AG04450 (cell line): ENCODE measurements at regions of chr2 and their contacts with region 1.

Region 1: DNA sequence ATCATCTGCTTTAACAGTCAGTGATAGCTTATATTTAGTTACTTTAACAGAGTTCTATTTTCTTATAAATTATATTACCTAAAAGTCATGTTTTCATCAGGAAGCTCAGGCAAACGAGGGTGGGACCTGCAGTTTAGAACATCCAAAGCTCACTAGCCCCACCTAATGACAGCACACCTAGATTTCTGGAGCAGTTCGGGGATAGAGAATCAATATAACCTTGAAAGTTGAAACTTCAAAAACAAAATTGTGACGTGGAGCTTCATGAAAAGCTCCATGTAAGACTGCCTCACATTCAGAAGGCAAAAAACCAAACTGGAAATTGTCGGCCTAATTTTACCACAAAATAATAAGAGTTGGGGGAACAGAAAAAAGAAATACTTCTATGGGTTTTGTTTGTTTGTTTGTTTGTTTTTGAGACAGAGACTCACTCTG is 185.9 kb upstream of the CCDC150 start:
- DNase-seq: peak; percentile 34
- H3K4me3 ChIP-seq: no peak overlapping the region
- H3K27ac ChIP-seq: no peak overlapping the region
- H3K27me3 ChIP-seq: no peaks in the 10 kb centered on the region
- CTCF ChIP-seq: peak; percentile 74

Region 2: DNA sequence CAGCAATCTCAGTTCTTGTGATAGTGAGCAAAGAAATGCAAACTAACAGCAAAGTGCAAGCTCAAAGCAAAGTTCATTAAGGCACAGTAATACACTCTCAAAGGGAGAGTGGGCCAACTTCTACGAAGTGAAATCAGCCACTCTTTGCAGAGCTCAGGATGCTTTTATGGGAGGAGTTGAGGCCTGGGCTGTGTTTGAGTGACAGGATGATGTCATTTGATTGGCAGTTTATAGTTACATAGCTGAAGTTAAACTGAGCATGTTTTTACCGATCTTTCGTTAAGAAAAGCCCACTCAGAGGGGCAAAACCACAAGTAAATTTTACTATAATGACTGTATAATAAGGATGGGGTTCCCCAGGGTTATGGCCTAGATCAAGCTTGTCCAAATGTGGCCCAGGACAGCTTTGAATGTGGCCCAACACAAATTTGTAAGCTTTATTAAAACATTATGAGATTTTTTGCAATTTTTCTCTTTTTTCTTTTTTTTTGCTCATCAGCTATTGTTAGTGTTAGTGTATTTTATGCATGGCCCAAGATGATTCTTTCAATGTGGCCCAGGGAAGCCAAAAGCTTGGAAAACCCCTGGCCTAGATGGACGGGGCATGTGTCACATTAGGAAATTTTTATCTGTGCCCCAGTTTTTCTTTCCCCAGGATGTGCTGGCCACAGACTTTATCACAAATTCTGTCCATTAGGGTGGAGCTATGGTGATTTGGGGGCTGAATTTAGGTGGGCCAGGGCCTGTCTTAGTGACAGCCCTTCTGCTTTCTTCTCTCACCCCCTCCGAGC is 376.7 kb before region 1 on chr2:
- CTCF ChIA-PET with region 1: interaction called, 58 read pairs
- POLR2A ChIA-PET with region 1: no interaction called
- DNase-seq: no peak
- H3K4me3 ChIP-seq: no peak overlapping the region
- H3K27ac ChIP-seq: no peak overlapping the region
- H3K27me3 ChIP-seq: no peaks in the 10 kb centered on the region
- CTCF ChIP-seq: no peak

Region 3: DNA sequence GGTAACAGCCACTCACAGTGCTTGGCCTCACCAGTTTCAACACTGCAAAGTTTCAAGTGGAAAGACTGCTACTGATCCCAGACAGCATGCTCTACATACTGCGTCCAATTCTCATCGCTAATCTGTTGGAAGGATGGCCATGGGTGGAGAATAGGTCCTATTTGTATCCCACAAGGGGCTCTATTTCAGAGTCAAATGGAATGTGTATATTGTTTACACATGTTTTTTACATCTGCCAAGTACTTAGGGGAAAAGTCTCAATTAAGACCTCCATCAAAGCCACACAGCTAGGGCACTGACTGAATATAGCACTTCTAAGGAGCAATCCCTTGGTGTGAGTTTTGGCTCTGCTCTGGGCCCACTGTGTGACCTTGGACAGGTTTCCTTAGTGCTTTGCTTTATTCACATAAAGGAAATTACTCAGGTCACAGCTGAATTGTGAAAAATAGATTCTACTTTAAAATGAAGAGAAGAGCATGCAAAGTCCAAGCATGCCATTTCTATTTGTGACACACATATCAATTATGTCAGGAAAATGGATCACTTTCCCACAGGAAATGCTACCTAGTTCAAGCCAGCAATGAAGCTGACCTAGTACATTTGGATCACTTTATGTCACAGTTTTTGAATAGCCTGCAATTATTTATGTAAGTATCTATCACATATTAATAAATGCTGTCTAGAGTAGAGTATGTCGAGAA is 169.3 kb before region 1 on chr2:
- CTCF ChIA-PET with region 1: interaction called, 12 read pairs
- POLR2A ChIA-PET with region 1: no interaction called
- DNase-seq: no peak
- H3K4me3 ChIP-seq: no peak overlapping the region
- H3K27ac ChIP-seq: no peak overlapping the region
- H3K27me3 ChIP-seq: no peaks in the 10 kb centered on the region
- CTCF ChIP-seq: no peak

Region 4: DNA sequence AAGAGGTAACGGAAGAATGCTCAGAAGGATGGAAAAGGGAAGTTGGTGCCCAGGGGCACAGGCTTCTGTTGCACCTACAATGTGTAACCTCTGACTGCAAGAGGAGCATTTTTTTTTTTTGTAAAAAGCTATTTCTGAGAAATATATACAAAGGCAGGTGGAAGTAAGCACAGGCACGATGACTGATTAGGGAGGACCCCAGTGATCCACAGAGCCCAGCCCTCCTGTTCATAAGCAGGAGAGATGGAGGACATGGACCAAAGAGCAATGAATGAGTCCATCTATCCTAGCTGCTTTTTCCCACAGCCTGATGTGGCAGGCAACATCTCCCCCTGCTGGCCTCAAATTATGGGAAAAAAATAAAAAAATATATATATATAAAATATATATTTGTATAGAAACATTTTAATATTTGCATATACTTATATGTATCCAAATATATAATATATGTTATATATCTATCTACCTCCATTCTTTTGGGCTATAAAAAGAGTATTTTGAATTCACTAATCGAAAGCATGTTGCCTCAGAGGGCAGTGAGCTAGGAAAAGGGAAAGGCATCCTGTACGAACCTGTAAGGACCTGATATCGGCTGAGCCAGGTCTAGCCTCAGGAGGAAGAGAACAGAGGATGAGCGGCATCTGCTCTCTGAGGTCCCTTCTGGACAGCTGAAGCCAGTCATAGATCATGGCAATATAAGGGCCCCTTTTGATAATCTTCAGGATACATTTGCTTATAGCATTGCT is 116.2 kb before region 1 on chr2:
- CTCF ChIA-PET with region 1: interaction called, 45 read pairs
- POLR2A ChIA-PET with region 1: no interaction called
- DNase-seq: no peak
- H3K4me3 ChIP-seq: no peak overlapping the region
- H3K27ac ChIP-seq: no peak overlapping the region
- H3K27me3 ChIP-seq: no peaks in the 10 kb centered on the region
- CTCF ChIP-seq: peak; percentile 60

Region 5: GRCh38 chr2:196356332-196356731 is 97.3 kb before region 1 on chr2:
- CTCF ChIA-PET with region 1: interaction called, 12 read pairs
- POLR2A ChIA-PET with region 1: no interaction called
- DNase-seq: no peak
- H3K4me3 ChIP-seq: no peak overlapping the region
- H3K27ac ChIP-seq: no peak overlapping the region
- H3K27me3 ChIP-seq: no peaks in the 10 kb centered on the region
- CTCF ChIP-seq: no peak

Region 6: GRCh38 chr2:196431957-196432356 is 21.7 kb before region 1 on chr2:
- CTCF ChIA-PET with region 1: interaction called, 19 read pairs
- POLR2A ChIA-PET with region 1: no interaction called
- DNase-seq: no peak
- H3K4me3 ChIP-seq: no peak overlapping the region
- H3K27ac ChIP-seq: no peak overlapping the region
- H3K27me3 ChIP-seq: no peaks in the 10 kb centered on the region
- CTCF ChIP-seq: peak; percentile 56

Region 7: GRCh38 chr2:196464311-196464710 is 10.7 kb after region 1 on chr2:
- CTCF ChIA-PET with region 1: interaction called, 13 read pairs
- POLR2A ChIA-PET with region 1: no interaction called
- DNase-seq: no peak
- H3K4me3 ChIP-seq: no peak overlapping the region
- H3K27ac ChIP-seq: no peak overlapping the region
- H3K27me3 ChIP-seq: no peaks in the 10 kb centered on the region
- CTCF ChIP-seq: no peak

Region 8: DNA sequence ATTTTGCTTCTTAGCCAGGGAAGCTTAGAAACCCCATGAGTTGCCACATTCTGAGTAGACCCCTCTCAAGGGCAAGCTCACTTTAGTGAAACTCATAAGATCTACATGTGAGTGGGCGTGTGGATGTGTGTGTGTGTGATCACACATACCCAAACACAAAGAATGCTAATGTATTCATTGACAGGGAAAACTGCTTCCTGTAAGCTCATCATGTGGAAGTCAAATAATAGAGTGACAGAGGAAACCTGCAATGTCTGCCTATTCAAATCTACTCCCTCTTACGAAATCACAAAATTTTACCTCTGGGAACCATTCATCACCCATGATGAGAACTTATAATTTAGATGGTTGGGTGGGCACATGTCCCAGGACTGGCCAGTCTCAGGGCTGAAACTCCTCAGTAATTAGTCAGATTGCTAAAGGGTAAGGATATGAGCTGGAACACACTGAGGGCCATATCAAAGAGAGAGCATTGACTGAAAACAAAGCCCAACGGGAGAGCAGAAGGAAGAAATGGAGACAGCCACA is 91.3 kb after region 1 on chr2:
- CTCF ChIA-PET with region 1: no interaction called
- POLR2A ChIA-PET with region 1: no interaction called
- DNase-seq: no peak
- H3K4me3 ChIP-seq: no peak overlapping the region
- H3K27ac ChIP-seq: no peak overlapping the region
- H3K27me3 ChIP-seq: no peaks in the 10 kb centered on the region
- CTCF ChIP-seq: no peak

Region 9: GRCh38 chr2:196725882-196726281 is 272.3 kb after region 1 on chr2:
- CTCF ChIA-PET with region 1: no interaction called
- POLR2A ChIA-PET with region 1: no interaction called
- DNase-seq: no peak
- H3K4me3 ChIP-seq: no peak overlapping the region
- H3K27ac ChIP-seq: no peak overlapping the region
- H3K27me3 ChIP-seq: no peaks in the 10 kb centered on the region
- CTCF ChIP-seq: no peak

Region 10: DNA sequence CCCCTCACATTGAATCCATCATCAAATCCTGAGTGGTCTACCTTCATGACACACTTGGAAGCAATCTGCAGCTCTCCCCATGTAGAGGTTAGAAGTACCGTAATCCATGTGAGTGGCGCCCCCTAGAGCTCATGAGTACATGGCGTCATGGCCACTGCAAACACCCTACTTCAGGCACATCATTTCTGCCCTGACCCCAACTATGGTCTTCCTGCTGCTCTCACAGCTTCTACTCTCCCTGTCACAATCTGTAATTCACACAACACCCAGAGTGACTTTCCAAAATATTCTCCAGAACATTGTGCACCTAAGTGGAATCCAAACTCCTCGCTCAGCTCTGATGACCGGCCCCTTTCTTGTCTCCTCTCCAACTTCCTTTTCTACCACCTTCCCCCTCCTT is 715.1 kb after region 1 on chr2:
- CTCF ChIA-PET with region 1: no interaction called
- POLR2A ChIA-PET with region 1: no interaction called
- DNase-seq: no peak
- H3K4me3 ChIP-seq: no peak overlapping the region
- H3K27ac ChIP-seq: no peak overlapping the region
- H3K27me3 ChIP-seq: no peaks in the 10 kb centered on the region
- CTCF ChIP-seq: peak; percentile 54

Region 11: DNA sequence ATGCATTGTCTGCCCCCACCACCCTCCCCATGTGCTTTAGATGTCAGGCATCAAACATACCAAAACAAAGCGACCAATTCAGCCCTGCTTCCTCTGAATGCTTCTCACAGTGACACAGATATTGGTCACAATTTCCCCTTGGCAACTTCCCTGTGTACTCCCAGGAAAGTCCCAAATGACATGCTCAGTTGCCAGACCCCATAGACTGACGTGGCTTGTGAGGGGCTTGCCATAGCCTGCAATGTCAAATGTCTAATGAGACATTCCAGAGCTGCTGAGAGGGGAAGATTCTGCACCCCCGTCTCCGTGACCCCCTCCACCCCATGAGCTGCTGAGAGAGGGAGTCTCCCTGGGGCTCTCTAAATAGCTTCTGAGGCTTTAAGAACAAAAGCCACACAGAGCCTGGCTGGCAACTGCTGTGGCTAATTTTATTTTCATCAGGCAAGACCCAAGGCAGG is 1174.4 kb after region 1 on chr2:
- CTCF ChIA-PET with region 1: no interaction called
- POLR2A ChIA-PET with region 1: no interaction called
- DNase-seq: no peak
- H3K4me3 ChIP-seq: no peak overlapping the region
- H3K27ac ChIP-seq: no peak overlapping the region
- H3K27me3 ChIP-seq: no peaks in the 10 kb centered on the region
- CTCF ChIP-seq: no peak